IMR-90 (cell line): ENCODE measurements at regions of chr10 and their contacts with region 1.

Region 1: GRCh38 chr10:47384148-47384921 is at the start of gene ZNF488:
- DNase-seq: peak; percentile 49
- ATAC-seq: peak; percentile 99
- H3K4me3 ChIP-seq: peak within 1 kb of the TSS; percentile 76
- H3K27ac ChIP-seq: peak within 1 kb of the TSS; percentile 65
- H3K4me1 ChIP-seq: peaks cover 2% of the 10 kb centered on the region; the same call in 1 of the 2 replicates
- H3K27me3 ChIP-seq: peaks cover 36% of the 10 kb centered on the region
- CTCF ChIP-seq: no peak
- POLR2A ChIP-seq: no peak
- RAD21 ChIP-seq: no peak
- total RNA-seq, gene ZNF488: under 0.01 TPM in 2 replicates

Region 2: DNA sequence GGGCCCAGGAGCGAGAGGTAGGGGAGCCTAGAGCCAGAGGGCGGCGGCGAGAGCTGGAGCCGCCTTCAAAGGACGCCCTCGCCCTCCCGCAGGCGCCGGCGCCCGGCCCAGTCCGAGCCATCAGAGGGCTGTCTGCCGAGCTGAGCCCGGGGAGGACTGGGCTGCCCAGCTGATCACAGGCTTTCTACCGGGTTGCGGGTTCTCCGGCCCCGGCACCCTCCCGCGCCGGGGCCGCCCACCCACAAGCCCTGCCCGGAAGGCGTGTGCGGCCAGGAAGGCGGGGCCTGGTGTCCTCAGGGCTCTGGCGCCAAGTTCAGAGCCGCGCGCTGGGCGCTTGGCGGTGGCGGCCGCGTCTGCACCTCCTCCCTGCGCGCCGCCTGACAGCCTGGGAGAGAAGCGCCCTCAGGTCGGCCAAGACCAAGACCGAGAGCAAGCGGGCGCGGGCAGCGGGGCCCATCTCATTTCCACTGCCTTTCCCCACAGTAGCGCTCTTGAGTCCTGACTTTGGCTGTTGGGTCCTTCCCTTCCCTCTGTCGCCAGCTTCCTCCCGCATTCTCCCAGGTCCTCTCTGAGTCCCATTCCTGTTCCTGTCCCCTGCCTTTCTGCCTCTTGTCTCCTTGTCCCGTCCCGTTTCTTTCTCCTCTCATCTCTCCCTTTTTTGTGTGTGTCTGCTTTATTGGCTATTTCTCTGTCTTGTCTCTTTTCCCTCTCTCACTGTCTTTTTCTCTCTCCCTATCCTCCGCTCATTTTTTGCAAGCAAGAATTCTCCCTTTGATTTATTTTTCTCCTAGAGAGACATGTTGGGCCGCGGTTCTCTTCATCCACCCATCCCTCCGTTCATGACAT is 1277.7 kb before region 1 on chr10:
- CTCF ChIA-PET with region 1: no interaction called
- POLR2A ChIA-PET with region 1: no interaction called
- dilution Hi-C with region 1: no loop called
- in situ Hi-C with region 1: loop called (anchors 10 kb)
- intact Hi-C with region 1: no loop called
- DNase-seq: peak; percentile 12
- ATAC-seq: peak; percentile 97
- H3K4me3 ChIP-seq: peak overlapping the region; percentile 51
- H3K27ac ChIP-seq: no peak overlapping the region; the same call in 1 of the 2 replicates
- H3K4me1 ChIP-seq: peaks cover 3% of the 10 kb centered on the region; the same call in 1 of the 2 replicates
- H3K27me3 ChIP-seq: peaks cover 20% of the 10 kb centered on the region
- CTCF ChIP-seq: no peak
- POLR2A ChIP-seq: no peak
- RAD21 ChIP-seq: no peak

Region 3: GRCh38 chr10:47326306-47326926 is 57.9 kb before region 1 on chr10:
- CTCF ChIA-PET with region 1: no interaction called
- POLR2A ChIA-PET with region 1: no interaction called
- dilution Hi-C with region 1: no loop called
- in situ Hi-C with region 1: no loop called
- intact Hi-C with region 1: no loop called
- DNase-seq: no peak
- ATAC-seq: no peak
- H3K4me3 ChIP-seq: no peak overlapping the region
- H3K27ac ChIP-seq: no peak overlapping the region
- H3K4me1 ChIP-seq: no peaks in the 10 kb centered on the region
- H3K27me3 ChIP-seq: peaks cover 30% of the 10 kb centered on the region
- CTCF ChIP-seq: no peak
- POLR2A ChIP-seq: no peak
- RAD21 ChIP-seq: no peak